CD8-positive, alpha-beta T cell (primary cell): ENCODE measurements at regions of chr6 and their contacts with region 1.

Region 1: GRCh38 chr6:42563697-42564505 is at the start of gene UBR2:
- DNase-seq: peak; percentile 82 to 98 (median 91)
- ATAC-seq: peak; percentile 95
- H3K4me3 ChIP-seq: peak within 1 kb of the TSS; percentile 95 to 99
- H3K4me3 Mint-ChIP-seq: peak within 1 kb of the TSS; percentile 93
- H3K27ac ChIP-seq: peak within 1 kb of the TSS; percentile 91 to 96
- H3K27ac Mint-ChIP-seq: peak within 1 kb of the TSS; percentile 94
- H3K4me1 ChIP-seq: peaks cover 25% of the 10 kb centered on the region
- H3K4me1 Mint-ChIP-seq: peaks cover 35% of the 10 kb centered on the region
- H3K27me3 ChIP-seq: no peaks in the 10 kb centered on the region
- H3K27me3 Mint-ChIP-seq: peaks cover 2% of the 10 kb centered on the region
- CTCF ChIP-seq: peak; percentile 27
- total RNA-seq, gene UBR2: 22.0 to 22.8 TPM

Region 2: GRCh38 chr6:41072676-41073623 is 1491.0 kb before region 1 on chr6 and contains the start of gene NFYA:
- CTCF ChIA-PET with region 1: no interaction called
- POLR2A ChIA-PET with region 1: no interaction called
- intact Hi-C with region 1: loop called (anchors 5 to 10 kb)
- DNase-seq: peak; percentile 99 to 100 (median 100)
- ATAC-seq: peak; percentile 70
- H3K4me3 ChIP-seq: peak within 1 kb of the TSS; percentile 72 to 86
- H3K4me3 Mint-ChIP-seq: peak within 1 kb of the TSS; percentile 92
- H3K27ac ChIP-seq: peak within 1 kb of the TSS; percentile 88 to 89
- H3K27ac Mint-ChIP-seq: peak within 1 kb of the TSS; percentile 95
- H3K4me1 ChIP-seq: peaks cover 37% of the 10 kb centered on the region
- H3K4me1 Mint-ChIP-seq: peaks cover 55% of the 10 kb centered on the region
- H3K27me3 ChIP-seq: no peaks in the 10 kb centered on the region
- H3K27me3 Mint-ChIP-seq: no peaks in the 10 kb centered on the region
- CTCF ChIP-seq: peak; percentile 46
- total RNA-seq, gene NFYA: 31.7 to 32.7 TPM

Region 3: GRCh38 chr6:41895300-41896233 is 668.3 kb before region 1 on chr6 and contains the start of gene USP49:
- CTCF ChIA-PET with region 1: no interaction called
- POLR2A ChIA-PET with region 1: no interaction called
- intact Hi-C with region 1: loop called in 1 of 2 experiments (anchors 10 kb)
- DNase-seq: peak; percentile 80 to 94 (median 91)
- ATAC-seq: peak; percentile 95
- H3K4me3 ChIP-seq: peak within 1 kb of the TSS; percentile 78 to 90
- H3K4me3 Mint-ChIP-seq: no peak within 1 kb of the TSS
- H3K27ac ChIP-seq: peak within 1 kb of the TSS; percentile 55 to 77
- H3K27ac Mint-ChIP-seq: peak within 1 kb of the TSS; percentile 89
- H3K4me1 ChIP-seq: peaks cover 24% of the 10 kb centered on the region
- H3K4me1 Mint-ChIP-seq: peaks cover 10% of the 10 kb centered on the region
- H3K27me3 ChIP-seq: no peaks in the 10 kb centered on the region
- H3K27me3 Mint-ChIP-seq: no peaks in the 10 kb centered on the region
- CTCF ChIP-seq: no peak
- total RNA-seq, gene USP49: 1.6 to 1.8 TPM

Region 4: DNA sequence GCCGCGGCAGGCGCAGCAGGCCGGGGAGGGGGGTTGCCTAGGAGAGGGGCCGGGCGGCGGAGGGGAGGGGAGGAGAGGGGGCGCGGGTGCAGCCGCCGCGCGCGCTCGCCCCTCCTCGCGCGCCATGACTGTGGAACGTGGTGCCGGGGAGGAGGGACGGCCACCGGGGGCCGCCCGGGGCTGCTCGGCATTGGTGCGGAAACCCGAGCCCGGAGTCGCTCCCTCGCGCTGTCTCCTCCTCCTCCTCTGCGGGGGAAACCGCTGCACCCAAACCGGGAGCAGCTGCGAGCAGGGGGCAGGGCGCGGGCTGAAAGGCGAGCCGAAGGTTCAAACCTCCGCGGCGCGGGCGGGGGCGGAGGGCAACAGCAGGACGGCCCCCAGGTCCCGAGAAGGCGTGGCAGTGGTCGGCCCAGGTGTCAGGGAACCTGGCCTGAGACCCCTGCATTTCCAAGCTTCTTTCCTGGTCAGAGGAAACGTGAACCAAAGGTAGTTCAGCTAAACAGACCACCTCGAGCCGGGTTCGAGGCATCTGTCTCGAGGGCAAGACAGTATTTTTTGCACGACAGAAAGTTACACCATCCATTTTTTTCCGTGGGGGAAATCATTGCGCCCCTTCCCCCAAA is 110.8 kb before region 1 on chr6:
- CTCF ChIA-PET with region 1: interaction called, 3 read pairs
- POLR2A ChIA-PET with region 1: interaction called, 12 read pairs
- intact Hi-C with region 1: no loop called
- DNase-seq: peak; percentile 42 to 90 (median 76)
- ATAC-seq: peak; percentile 74
- H3K4me3 ChIP-seq: peak overlapping the region; percentile 82 to 98
- H3K4me3 Mint-ChIP-seq: peak overlapping the region; percentile 100
- H3K27ac ChIP-seq: peak overlapping the region in 1 of 2 experiments; percentile 72
- H3K27ac Mint-ChIP-seq: no peak overlapping the region
- H3K4me1 ChIP-seq: peaks cover 29% of the 10 kb centered on the region
- H3K4me1 Mint-ChIP-seq: peaks cover 33% of the 10 kb centered on the region
- H3K27me3 ChIP-seq: no peaks in the 10 kb centered on the region
- H3K27me3 Mint-ChIP-seq: no peaks in the 10 kb centered on the region
- CTCF ChIP-seq: no peak

Region 5: GRCh38 chr6:42505377-42505702 is 58.6 kb before region 1 on chr6:
- CTCF ChIA-PET with region 1: no interaction called
- POLR2A ChIA-PET with region 1: no interaction called
- intact Hi-C with region 1: no loop called
- DNase-seq: no peak
- ATAC-seq: no peak
- H3K4me3 ChIP-seq: no peak overlapping the region
- H3K4me3 Mint-ChIP-seq: no peak overlapping the region
- H3K27ac ChIP-seq: no peak overlapping the region
- H3K27ac Mint-ChIP-seq: no peak overlapping the region
- H3K4me1 ChIP-seq: no peaks in the 10 kb centered on the region
- H3K4me1 Mint-ChIP-seq: peaks cover 2% of the 10 kb centered on the region
- H3K27me3 ChIP-seq: no peaks in the 10 kb centered on the region
- H3K27me3 Mint-ChIP-seq: no peaks in the 10 kb centered on the region
- CTCF ChIP-seq: no peak

Region 6: DNA sequence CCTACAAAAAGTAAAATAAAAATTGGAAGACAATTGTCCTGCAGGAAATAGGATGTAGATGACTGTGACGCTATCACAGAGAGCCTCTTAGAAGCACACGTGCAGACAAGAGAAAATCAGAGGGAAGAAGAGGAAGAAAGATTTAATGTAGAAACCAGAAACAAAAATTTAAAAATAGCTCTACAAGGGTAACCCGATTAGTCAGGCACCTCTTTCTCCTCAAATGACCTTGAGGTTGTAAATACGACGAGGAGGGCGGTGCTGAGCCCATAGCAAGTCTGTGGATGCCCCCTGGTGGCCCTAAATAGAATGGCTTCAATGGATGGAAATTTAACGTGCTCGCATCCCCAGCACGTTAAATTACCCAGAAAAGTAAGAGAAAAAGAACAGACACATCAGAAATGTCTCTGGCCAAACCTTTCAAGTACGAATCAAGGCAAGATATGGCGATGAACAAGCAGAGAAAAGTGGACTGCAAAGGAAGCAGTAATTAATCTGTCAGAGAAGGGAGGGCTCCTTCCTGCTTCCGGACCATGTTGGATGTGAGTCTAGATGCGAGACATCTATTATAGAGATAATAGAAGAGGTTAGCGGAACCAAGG is 162.7 kb after region 1 on chr6:
- CTCF ChIA-PET with region 1: no interaction called
- POLR2A ChIA-PET with region 1: no interaction called
- intact Hi-C with region 1: no loop called
- DNase-seq: peak; percentile 29 to 95 (median 76)
- ATAC-seq: peak; percentile 98
- H3K4me3 ChIP-seq: peak overlapping the region; percentile 54 to 73
- H3K4me3 Mint-ChIP-seq: peak overlapping the region; percentile 88
- H3K27ac ChIP-seq: peak overlapping the region; percentile 75 to 85
- H3K27ac Mint-ChIP-seq: peak overlapping the region; percentile 97
- H3K4me1 ChIP-seq: peaks cover 13% of the 10 kb centered on the region
- H3K4me1 Mint-ChIP-seq: peaks cover 17% of the 10 kb centered on the region
- H3K27me3 ChIP-seq: no peaks in the 10 kb centered on the region
- H3K27me3 Mint-ChIP-seq: no peaks in the 10 kb centered on the region
- CTCF ChIP-seq: peak; percentile 88

Region 7: DNA sequence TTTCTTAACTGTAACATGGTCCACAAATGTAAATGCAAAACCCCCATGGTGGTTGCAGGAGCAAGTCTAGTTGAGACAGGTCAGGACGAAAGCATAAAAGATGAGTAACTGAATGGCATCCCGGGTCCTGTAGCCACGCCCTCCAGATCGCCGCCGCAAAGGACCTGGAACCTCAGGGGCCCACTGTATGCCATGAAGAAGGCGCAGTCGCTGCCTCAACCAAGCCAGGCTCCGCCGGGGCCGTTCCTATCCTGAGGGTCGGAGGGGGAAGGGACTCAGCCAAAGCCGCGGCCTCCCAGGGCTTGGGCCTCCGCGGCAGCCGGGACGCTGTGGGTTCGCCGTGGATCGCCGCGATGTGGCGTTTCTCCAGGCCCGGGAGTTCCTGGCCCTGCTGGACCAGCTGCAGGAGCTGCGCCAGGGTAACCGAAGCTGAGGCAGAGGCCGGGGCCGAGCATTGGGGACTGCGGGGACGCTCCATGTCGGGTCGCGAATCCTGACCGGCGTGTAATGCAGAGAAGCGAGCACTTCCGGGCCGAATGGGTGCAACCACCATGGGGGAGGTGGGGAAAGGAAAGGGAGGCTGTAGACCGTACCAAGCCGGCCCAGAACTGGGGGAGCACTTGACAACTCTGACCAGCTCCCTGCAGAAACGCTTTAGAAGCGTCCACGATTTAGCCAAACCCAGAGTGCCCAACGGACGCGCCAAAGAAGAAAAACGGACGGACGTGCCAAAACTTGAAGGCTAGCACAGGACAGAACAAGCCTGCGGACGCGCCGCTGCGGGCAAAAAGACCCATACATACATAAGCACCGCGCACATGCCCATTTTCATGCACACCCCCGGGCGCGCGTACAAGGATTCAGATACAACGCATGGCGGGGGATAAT is 326.7 kb after region 1 on chr6:
- CTCF ChIA-PET with region 1: no interaction called
- POLR2A ChIA-PET with region 1: no interaction called
- intact Hi-C with region 1: loop called in 1 of 2 experiments (anchors 2 kb)
- DNase-seq: peak; percentile 77 to 94 (median 90)
- ATAC-seq: peak; percentile 95
- H3K4me3 ChIP-seq: peak overlapping the region; percentile 92 to 99
- H3K4me3 Mint-ChIP-seq: peak overlapping the region; percentile 92
- H3K27ac ChIP-seq: peak overlapping the region; percentile 91
- H3K27ac Mint-ChIP-seq: peak overlapping the region; percentile 95
- H3K4me1 ChIP-seq: peaks cover 10% of the 10 kb centered on the region
- H3K4me1 Mint-ChIP-seq: peaks cover 19% of the 10 kb centered on the region
- H3K27me3 ChIP-seq: no peaks in the 10 kb centered on the region
- H3K27me3 Mint-ChIP-seq: no peaks in the 10 kb centered on the region
- CTCF ChIP-seq: no peak

Region 8: GRCh38 chr6:43174263-43175112 is 610.6 kb after region 1 on chr6:
- CTCF ChIA-PET with region 1: interaction called, 3 read pairs
- POLR2A ChIA-PET with region 1: no interaction called
- intact Hi-C with region 1: loop called in 1 of 2 experiments (anchors 10 kb)
- DNase-seq: peak; percentile 77 to 98 (median 92)
- ATAC-seq: peak; percentile 52
- H3K4me3 ChIP-seq: peak overlapping the region; percentile 4 to 50
- H3K4me3 Mint-ChIP-seq: peak overlapping the region; percentile 63
- H3K27ac ChIP-seq: peak overlapping the region; percentile 62 to 89
- H3K27ac Mint-ChIP-seq: peak overlapping the region; percentile 95
- H3K4me1 ChIP-seq: peaks cover 40% of the 10 kb centered on the region
- H3K4me1 Mint-ChIP-seq: peaks cover 45% of the 10 kb centered on the region
- H3K27me3 ChIP-seq: no peaks in the 10 kb centered on the region
- H3K27me3 Mint-ChIP-seq: no peaks in the 10 kb centered on the region
- CTCF ChIP-seq: no peak

Region 9: DNA sequence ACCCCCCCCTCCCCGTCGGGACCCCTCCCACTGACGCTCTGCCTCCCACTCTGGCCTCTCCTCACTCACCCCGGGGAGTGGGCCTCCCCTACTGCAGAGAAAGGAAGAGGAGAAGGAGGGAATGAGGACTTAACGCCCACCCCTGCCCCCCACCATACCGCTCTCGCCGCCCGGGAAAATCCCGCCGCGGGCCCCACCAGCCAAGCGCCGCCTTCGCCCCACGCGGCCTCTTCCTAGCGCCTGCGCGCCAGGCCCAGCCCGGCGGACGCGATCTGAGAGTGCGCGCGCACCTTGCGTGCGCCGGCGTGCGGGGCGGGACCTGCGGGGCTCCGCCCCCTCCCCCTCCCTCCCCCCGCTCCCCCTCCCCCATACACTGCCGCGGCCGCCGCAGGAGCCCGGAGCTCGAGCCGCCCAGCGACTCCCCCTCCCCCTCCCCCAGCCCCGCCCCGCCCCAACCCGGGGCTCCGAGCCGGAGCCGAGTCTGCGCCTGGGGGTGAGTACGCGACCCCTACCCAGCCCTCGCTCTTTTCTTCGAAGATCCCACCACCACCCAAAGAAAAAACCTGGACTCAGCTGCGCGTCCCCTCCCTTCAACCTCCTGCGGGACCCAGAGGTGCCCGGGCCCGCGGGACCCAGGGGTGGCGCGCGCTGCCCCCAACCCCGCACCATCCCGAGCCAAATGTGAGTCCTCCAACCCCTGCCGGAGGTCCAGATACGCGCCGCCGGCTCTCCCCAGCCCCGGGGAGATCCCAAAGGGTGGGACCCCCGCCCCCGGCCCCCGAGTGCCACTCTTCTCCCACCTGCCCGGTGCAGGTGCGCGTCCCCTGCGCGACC is 1563.5 kb after region 1 on chr6 and contains the starts of genes MRPL14 and TMEM63B:
- CTCF ChIA-PET with region 1: no interaction called
- POLR2A ChIA-PET with region 1: no interaction called
- intact Hi-C with region 1: loop called in 1 of 2 experiments (anchors 5 kb)
- DNase-seq: peak; percentile 81 to 96 (median 88)
- ATAC-seq: peak; percentile 88
- H3K4me3 ChIP-seq: peak within 1 kb of the TSS; percentile 85 to 91
- H3K4me3 Mint-ChIP-seq: peak within 1 kb of the TSS; percentile 94
- H3K27ac ChIP-seq: peak within 1 kb of the TSS; percentile 65 to 82
- H3K27ac Mint-ChIP-seq: peak within 1 kb of the TSS; percentile 96
- H3K4me1 ChIP-seq: peaks cover 50% of the 10 kb centered on the region
- H3K4me1 Mint-ChIP-seq: peaks cover 55% of the 10 kb centered on the region
- H3K27me3 ChIP-seq: no peaks in the 10 kb centered on the region
- H3K27me3 Mint-ChIP-seq: no peaks in the 10 kb centered on the region
- CTCF ChIP-seq: no peak
- total RNA-seq, gene MRPL14: 10.3 to 10.5 TPM
- total RNA-seq, gene TMEM63B: 14.1 to 19.0 TPM

Region 10: GRCh38 chr6:44415449-44415848 is 1851.5 kb after region 1 on chr6:
- CTCF ChIA-PET with region 1: no interaction called
- POLR2A ChIA-PET with region 1: no interaction called
- intact Hi-C with region 1: no loop called
- DNase-seq: no peak
- ATAC-seq: no peak
- H3K4me3 ChIP-seq: no peak overlapping the region
- H3K4me3 Mint-ChIP-seq: no peak overlapping the region
- H3K27ac ChIP-seq: no peak overlapping the region
- H3K27ac Mint-ChIP-seq: peak overlapping the region; percentile 15
- H3K4me1 ChIP-seq: no peaks in the 10 kb centered on the region
- H3K4me1 Mint-ChIP-seq: peaks cover 44% of the 10 kb centered on the region
- H3K27me3 ChIP-seq: no peaks in the 10 kb centered on the region
- H3K27me3 Mint-ChIP-seq: no peaks in the 10 kb centered on the region
- CTCF ChIP-seq: no peak